Body of pancreas (tissue), 4 donors: ENCODE measurements at regions of chr2 and their contacts with region 1.

Region 1: DNA sequence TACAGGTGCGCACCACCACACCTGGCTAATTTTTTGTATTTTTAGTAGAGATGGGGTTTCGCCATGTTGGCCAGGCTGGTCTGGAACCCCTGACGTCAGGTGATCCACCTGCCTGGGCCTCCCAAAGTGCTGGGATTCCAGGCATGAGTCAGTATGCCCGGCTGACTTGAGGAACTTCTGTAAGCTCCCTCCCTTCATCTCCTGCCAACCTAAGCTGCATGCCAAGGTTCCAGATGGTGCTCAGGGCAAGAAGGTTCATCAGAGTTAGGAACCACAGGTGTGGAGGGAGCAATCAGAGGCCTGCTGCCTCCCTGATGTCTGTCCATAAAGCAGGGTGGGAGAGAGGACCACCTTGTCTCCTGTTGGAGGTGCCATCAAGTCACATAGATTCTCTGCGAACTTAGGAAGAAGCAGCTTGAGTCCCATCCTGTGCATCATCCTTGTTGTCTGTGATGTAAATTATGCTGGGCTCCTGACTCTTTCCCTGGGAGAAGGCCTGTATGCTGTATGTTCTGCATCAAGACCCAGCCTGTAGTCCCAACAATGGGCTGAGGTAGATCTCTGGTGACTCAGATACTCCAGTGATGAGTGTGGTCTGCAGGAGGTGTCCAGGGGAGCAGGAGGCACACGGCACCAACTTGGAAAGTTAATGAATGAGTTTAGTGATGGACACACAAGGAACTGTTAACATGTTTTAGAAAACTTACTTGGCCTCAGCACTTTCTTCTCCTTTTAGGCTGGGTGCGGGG is 53.1 kb downstream of the TMEM17 start:
- DNase-seq: peak in 1 of 4 donors; percentile 64
- ATAC-seq: no peak
- H3K4me3 ChIP-seq: no peak overlapping the region
- H3K27ac ChIP-seq: no peak overlapping the region
- H3K4me1 ChIP-seq: peaks cover 24% of the 10 kb centered on the region
- H3K27me3 ChIP-seq: no peaks in the 10 kb centered on the region
- CTCF ChIP-seq: no peak
- POLR2A ChIP-seq: no peak

Region 2: GRCh38 chr2:62783679-62784078 is 330.8 kb after region 1 on chr2:
- intact Hi-C with region 1: loop called (anchors 5 kb)
- DNase-seq: no peak
- ATAC-seq: no peak
- H3K4me3 ChIP-seq: no peak overlapping the region
- H3K27ac ChIP-seq: no peak overlapping the region
- H3K4me1 ChIP-seq: peaks cover 1% of the 10 kb centered on the region
- H3K27me3 ChIP-seq: no peaks in the 10 kb centered on the region
- CTCF ChIP-seq: no peak
- POLR2A ChIP-seq: no peak